GM10248 (cell line): ENCODE measurements at regions of chr21 and their contacts with region 1.

Region 1: GRCh38 chr21:16460931-16461330 is 731.1 kb downstream of the USP25 start:
- DNase-seq: no peak
- CTCF ChIP-seq: no peak

Region 2: DNA sequence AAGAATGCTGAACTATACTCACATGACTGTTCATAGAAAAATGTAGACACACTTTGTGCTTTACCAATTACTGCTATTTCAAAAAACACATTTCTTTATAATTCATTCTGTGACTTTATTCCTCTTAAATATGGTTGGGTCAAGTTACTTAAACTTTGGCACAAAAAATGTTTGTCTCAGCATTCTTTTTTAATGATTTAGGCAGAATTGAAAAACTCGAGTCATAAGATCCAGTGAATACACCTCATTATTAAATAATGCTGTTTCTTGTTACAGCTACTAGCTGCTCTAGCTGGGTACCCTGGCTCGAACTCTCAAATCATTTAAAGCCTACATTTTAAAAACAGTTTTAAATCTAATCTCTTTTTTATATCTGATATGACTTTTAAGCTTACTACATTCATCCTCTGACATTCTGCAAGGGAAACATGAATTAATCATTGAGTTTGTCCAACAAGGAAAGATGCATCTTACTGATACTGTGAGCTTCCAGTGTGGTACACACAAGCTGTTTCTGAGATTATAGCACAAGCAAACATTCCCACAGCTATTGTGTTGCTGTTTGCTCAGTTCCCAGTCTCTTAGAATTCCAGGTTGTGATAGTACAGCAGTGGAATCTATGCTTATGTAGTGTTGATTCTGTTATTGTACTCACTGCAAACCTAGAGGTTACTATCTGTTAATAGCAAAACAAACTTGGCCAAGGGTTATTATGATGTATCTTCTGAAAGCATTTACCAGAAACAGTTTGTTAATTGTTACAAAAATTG is 15.3 kb after region 1 on chr21:
- CTCF ChIA-PET with region 1: interaction called, 10 read pairs
- POLR2A ChIA-PET with region 1: no interaction called
- DNase-seq: no peak
- CTCF ChIP-seq: no peak

Region 3: DNA sequence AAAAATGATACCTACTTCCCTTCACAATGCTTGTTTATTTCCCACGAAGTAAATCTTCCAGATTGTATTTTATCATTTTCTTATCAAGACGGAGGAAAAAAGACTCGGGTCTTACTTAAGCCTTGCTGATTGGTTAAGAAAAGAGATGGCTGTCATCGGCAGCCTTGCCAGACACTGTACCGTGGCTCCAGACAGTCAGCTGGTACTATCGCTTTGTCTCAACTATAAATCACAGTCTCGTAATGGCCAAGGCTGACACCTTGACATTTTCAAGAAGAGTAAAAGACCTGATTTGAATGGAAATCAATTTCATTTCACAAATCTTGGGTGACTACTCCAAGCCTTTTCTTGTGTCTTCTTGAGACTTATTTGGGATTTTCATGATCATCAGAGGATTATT is 136.8 kb after region 1 on chr21:
- CTCF ChIA-PET with region 1: no interaction called
- POLR2A ChIA-PET with region 1: no interaction called
- DNase-seq: no peak
- CTCF ChIP-seq: no peak

Region 4: DNA sequence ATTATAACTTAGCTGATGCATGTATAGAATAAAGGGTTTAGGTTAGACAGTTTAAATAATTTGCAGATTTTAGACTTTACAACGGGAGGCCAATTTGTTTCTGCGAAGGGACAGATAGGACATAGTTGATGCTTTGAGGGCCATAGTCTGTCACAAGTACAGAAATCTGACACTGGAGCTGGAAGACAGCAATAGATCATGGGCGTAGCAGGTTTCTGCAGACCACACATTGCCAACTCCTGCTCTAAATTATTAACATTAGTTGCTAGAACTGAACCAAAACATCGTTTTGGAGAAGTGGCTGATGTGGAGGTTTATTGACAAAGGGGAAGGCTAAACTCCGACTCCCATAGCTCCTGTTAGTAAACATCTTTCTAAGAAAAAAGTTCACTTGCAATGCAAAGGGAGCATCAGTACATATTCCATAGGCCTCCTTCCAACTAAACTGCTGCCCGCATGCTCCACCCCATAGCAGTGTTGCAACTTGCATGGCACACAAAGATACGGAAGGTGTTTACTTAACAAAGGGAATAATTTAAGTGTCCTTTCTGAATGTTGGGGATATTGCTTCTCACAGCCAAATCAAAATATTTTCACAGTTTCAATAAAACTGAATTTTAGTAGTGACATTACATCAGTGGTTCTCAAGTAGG is 189.9 kb after region 1 on chr21:
- CTCF ChIA-PET with region 1: no interaction called
- POLR2A ChIA-PET with region 1: no interaction called
- DNase-seq: no peak
- CTCF ChIP-seq: no peak